ENCODE measurements at regions of chr6 and their contacts with region 1.

Region 1: DNA sequence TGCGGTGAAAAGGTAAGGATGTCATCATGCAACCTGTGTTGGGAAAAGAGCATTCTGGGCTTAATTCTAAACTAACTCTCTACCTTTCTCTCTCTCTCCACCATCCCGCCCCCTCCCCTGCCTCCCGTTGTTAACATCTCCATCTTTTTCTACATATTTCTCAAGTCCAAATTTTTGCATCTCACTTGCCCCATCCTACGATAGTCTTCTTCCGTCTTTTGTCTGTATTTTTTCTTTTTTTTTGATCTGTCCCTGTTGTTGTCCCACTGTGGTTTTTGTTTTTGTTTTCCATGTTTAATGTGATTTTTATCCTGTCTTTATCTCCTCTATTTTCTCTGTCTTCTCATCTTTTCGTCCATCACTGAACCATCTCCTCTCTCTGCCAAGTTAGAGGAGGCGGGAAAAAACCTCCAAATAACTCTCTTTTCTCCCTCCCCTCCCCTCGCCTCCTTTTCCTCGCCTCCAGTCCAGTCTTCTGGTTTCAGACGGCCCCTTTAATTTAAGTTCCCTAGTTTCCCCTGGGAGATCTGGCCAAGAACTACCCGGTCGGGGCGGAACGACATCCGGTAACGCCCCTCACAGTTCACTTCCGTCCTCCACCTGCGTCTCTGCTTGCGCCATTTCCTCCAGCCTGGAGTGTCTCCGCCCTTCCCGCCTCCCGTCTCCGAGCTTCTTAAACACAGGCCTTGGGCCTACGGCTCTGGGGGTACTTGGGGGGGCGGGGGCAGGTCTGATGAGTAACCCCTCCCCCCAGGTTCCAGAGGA is at the start of gene NFKBIL1:
- DNase-seq: peak; percentile 98
- total RNA-seq, gene NFKBIL1: 12.0 to 13.2 TPM

Region 2: DNA sequence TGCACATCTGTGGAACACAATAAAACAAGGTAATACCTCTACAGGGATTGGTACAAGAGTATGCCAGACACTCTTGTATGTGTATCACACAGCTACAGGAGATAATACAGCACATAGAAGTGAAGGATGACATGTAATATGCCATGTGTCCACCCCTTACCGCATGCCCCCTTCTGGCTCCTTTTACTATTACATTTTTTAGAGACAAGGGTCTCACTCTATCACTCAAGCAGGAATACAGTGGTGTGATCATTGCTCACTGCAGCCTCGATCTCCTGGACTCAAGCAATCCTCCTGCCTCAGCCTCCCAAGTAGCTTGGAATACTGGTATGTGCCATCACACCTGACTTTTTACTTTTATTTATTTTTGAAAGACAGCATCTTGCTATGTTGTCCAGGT is 49.9 kb after region 1 on chr6:
- intact Hi-C with region 1: loop called (anchors 1 to 5 kb)
- DNase-seq: no peak

Region 3: DNA sequence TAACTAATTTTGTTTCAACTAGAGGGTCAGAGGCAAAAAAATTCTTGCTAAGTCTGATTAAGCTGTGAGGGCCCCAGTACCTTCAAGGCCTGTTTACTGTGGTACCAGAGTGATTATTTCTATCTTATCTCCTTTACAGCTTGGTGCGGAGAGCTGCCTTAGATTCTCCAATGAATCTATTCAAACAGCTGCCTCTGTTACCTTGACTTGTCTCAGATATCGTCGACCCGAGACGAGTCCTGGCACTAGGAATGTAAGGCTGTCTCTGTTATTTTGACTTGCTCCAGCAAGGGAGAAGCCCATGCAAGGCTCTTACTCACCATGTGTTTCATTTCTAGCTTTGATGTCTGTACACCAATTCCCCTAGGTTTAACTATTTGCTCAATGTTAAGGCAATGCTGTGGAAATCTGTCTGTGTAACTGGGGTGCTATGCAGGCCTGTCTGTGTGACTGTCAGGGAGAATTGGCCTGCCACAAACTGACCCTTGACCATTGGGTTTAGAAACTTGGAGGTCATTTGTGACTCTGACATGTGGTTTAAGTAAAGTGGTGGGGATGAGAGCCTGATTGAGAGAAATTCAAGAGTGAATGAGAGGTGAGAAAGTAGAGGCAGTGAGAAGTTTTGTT is 593.4 kb after region 1 on chr6:
- intact Hi-C with region 1: no loop called
- DNase-seq: no peak